Naive thymus-derived CD4-positive, alpha-beta T cell (primary cell): ENCODE measurements at regions of chr2 and their contacts with region 1.

Region 1: DNA sequence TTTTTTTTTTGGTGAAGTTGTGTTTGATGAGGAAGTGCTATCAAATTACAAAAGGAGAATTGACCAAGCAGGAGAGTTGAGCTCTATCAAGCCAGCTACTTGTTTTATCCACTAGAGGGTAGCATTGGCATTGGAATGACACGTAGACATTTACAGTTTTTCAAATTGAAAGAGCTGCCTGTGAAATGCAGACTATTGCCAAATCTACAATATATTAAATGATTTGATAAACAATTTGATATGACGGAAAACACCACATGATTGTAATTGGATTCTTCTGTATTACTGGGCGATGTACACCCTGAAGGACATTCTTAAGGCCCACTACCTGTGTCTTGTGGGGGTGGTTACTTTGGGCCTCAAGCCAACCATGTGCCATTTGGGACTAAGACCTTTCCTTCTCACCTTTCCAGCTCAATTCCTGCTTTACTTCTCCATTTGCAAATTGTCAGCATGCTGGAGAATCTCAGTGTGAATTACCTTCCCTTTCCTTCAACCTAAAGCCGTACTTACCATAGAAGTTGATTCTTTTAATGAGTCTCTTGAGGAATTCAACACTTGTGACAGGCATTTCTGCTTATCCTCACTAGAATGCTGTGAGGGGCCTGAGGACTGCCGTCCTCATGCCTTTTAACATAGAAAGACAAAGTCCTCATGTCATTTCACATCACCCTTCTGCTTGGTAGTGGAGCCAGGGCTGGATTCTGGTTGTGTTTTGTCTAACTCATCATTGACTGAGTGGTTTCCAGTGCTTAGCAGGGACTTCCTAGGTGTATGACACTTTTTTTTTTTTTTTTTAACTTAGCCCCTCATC is 134.8 kb upstream of the THUMPD2 start:
- DNase-seq: peak in 5 of 9 donors; percentile 5 to 36 (median 17)
- ATAC-seq: peak; percentile 61
- H3K4me3 ChIP-seq: no peak overlapping the region
- H3K4me3 Mint-ChIP-seq: no peak overlapping the region
- H3K27ac ChIP-seq: no peak overlapping the region
- H3K27ac Mint-ChIP-seq: no peak overlapping the region
- H3K4me1 ChIP-seq: no peaks in the 10 kb centered on the region
- H3K4me1 Mint-ChIP-seq: peaks cover 0 to 28% (median 0%) of the 10 kb centered on the region in 7 donors
- H3K27me3 ChIP-seq: no peaks in the 10 kb centered on the region
- H3K27me3 Mint-ChIP-seq: peaks cover 0 to 26% (median 10%) of the 10 kb centered on the region in 5 donors

Region 2: DNA sequence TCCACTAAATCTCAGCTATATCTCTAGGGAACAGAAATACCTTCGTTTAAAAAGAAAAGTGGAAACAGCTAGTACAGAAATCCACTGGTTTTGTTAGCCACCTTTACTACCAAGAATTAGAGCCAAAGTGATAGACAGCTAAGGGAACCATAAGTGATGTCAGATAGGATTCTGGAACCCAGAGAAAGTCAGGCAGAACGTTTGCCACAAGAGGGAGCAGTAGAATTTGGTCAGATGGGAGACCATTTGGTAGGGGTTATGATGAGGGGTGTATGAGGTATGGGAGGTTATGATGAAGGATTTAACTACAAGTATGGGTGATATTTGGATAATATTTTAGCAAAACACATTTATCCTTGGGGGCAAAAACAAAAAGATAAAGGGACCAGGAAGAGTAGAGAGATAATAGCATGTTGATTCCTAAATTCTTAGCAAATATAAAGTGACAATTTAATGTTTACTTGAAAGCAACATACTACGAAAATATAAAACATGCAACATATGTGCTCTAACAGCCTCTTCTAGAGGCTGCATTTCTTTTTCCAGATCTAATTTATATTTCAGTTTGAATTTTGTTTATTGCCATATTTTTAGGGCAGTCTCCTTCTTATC is 534.7 kb after region 1 on chr2:
- CTCF ChIA-PET with region 1: no interaction called
- POLR2A ChIA-PET with region 1: no interaction called
- intact Hi-C with region 1: loop called in 1 of 2 experiments (anchors 2 kb)
- DNase-seq: no peak
- ATAC-seq: no peak
- H3K4me3 ChIP-seq: no peak overlapping the region
- H3K4me3 Mint-ChIP-seq: no peak overlapping the region
- H3K27ac ChIP-seq: no peak overlapping the region
- H3K27ac Mint-ChIP-seq: no peak overlapping the region
- H3K4me1 ChIP-seq: no peaks in the 10 kb centered on the region
- H3K4me1 Mint-ChIP-seq: peaks cover 6 to 25% (median 18%) of the 10 kb centered on the region in 7 donors
- H3K27me3 ChIP-seq: peaks cover 0 to 3% of the 10 kb centered on the region in 2 donors
- H3K27me3 Mint-ChIP-seq: peaks cover 30 to 48% (median 46%) of the 10 kb centered on the region in 5 donors

Region 3: GRCh38 chr2:40554668-40555285 is 640.9 kb after region 1 on chr2:
- CTCF ChIA-PET with region 1: no interaction called
- POLR2A ChIA-PET with region 1: no interaction called
- intact Hi-C with region 1: loop called in 1 of 2 experiments (anchors 1 kb)
- DNase-seq: peak in 6 of 9 donors; percentile 5 to 49 (median 12)
- ATAC-seq: peak; percentile 75
- H3K4me3 ChIP-seq: no peak overlapping the region
- H3K4me3 Mint-ChIP-seq: no peak overlapping the region
- H3K27ac ChIP-seq: no peak overlapping the region
- H3K27ac Mint-ChIP-seq: no peak overlapping the region
- H3K4me1 ChIP-seq: no peaks in the 10 kb centered on the region
- H3K4me1 Mint-ChIP-seq: peaks cover 0 to 2% (median 0%) of the 10 kb centered on the region in 7 donors
- H3K27me3 ChIP-seq: no peaks in the 10 kb centered on the region
- H3K27me3 Mint-ChIP-seq: peaks cover 0 to 7% (median 0%) of the 10 kb centered on the region in 5 donors

Region 4: DNA sequence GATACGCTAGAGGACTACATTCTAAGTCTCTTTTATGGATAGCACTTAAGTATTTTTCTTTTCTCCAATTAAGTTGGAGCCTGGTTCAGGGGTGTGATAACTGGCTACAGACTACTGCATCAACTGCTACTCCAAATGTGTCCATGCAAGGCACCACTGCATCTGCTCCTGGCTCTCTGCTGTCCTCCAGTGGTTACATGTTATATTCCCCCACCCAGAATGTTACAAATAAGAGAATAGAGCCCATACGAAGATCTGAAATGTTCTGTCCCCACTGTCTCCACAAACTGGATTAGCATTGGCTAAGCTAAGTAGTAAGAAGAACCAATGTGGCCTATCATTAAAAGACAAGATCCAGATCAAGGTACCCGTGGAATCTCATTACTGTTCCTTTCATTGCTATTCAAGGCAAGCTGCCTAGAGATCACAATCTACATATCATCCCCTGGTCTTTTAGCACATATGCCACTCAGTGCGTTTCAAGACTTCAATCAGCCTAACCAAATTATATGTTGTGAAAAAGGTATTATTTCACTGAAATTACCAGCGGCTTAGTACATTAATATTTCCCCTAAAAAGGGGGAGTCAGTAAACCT is 846.3 kb after region 1 on chr2:
- CTCF ChIA-PET with region 1: no interaction called
- POLR2A ChIA-PET with region 1: no interaction called
- intact Hi-C with region 1: loop called in 1 of 2 experiments (anchors 1 kb)
- DNase-seq: no peak
- ATAC-seq: peak; percentile 55
- H3K4me3 ChIP-seq: no peak overlapping the region
- H3K4me3 Mint-ChIP-seq: no peak overlapping the region
- H3K27ac ChIP-seq: no peak overlapping the region
- H3K27ac Mint-ChIP-seq: no peak overlapping the region
- H3K4me1 ChIP-seq: no peaks in the 10 kb centered on the region
- H3K4me1 Mint-ChIP-seq: peaks cover 0 to 7% (median 0%) of the 10 kb centered on the region in 7 donors
- H3K27me3 ChIP-seq: no peaks in the 10 kb centered on the region
- H3K27me3 Mint-ChIP-seq: no peaks in the 10 kb centered on the region

Region 5: DNA sequence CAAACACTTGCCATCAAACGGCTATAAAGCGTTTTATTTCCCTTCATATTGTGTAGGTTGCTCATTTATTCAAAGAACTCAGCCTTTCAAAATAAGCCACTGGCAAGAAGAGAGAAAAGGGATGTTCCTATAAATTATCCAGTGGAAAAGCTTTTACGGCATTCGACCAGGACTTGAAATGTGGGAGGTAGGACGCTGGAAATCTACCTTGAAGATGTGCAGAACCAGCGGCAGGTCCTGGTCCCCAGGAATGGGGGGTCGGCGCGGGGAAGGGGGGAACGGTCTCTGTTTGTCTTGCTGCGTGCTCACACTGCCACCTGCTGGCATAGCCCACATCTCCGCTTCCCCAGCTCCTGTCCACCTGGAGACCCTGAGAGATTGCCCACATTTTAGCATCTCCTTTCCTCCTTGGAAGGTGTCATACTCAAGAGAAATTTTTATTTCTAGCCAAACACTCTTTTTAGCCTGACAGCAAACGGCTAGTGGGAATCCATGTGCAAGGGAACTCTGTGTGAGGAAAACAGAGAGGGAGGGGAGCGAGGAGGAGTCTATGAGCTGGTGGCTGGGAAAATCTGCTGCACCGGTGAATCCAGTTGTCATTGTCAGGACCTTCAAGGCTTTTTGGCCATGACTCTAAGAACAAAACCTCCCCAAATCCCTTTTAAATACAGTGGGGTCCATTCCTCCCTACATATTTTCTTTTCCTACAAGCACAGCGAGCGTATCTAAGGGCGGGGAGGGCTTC is 1785.0 kb after region 1 on chr2:
- CTCF ChIA-PET with region 1: no interaction called
- POLR2A ChIA-PET with region 1: no interaction called
- intact Hi-C with region 1: loop called in 1 of 2 experiments (anchors 2 kb)
- DNase-seq: peak in 1 of 9 donors; percentile 1
- ATAC-seq: no peak
- H3K4me3 ChIP-seq: no peak overlapping the region
- H3K4me3 Mint-ChIP-seq: peak overlapping the region in 1 of 10 donors; percentile 44
- H3K27ac ChIP-seq: no peak overlapping the region
- H3K27ac Mint-ChIP-seq: no peak overlapping the region
- H3K4me1 ChIP-seq: no peaks in the 10 kb centered on the region
- H3K4me1 Mint-ChIP-seq: peaks cover 0 to 7% (median 0%) of the 10 kb centered on the region in 7 donors
- H3K27me3 ChIP-seq: no peaks in the 10 kb centered on the region
- H3K27me3 Mint-ChIP-seq: peaks cover 4 to 33% (median 28%) of the 10 kb centered on the region in 5 donors